ENCODE measurements at regions of chr7 and their contacts with region 1.

Region 1: DNA sequence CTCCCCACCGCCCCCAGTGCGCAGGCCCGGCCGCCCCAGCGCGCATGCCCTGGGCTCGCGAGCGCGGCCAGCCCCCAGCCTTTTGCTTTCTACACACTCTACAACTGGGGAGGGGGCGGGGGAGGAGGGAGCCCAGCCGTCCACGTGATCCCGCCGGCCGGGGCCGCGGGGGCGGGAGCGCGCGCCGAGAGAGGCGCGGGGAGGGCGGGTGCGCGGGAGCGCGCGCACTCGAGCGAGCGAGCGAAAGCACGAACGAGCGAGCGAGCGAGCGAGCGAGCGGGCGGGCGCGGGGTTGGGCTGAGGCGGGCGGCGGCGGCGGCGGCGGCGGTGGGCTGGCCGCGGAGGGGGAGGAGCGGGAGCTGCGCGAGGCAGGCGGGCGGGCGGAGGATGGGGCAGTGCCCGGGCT is at the start of gene AUTS2:
- DNase-seq: peak; percentile 75 to 82
- ATAC-seq: peak; percentile 70 to 74
- H3K4me3 ChIP-seq: peak within 1 kb of the TSS; percentile 72 to 92 (median 88)
- H3K27ac ChIP-seq: peak within 1 kb of the TSS; percentile 85 to 94 (median 88)
- H3K4me1 ChIP-seq: peaks cover 10 to 31% of the 10 kb centered on the region in 2 donors
- H3K27me3 ChIP-seq: no peaks in the 10 kb centered on the region
- CTCF ChIP-seq: no peak
- POLR2A ChIP-seq: peak; percentile 34 to 41
- total RNA-seq, gene AUTS2: 2.5 to 16.2 (median 8.5) TPM

Region 2: GRCh38 chr7:69412331-69413078 is 185.6 kb before region 1 on chr7:
- in situ Hi-C with region 1: no loop called
- intact Hi-C with region 1: loop called (anchors 5 kb)
- DNase-seq: peak; percentile 33 to 48
- ATAC-seq: peak; percentile 90 to 98
- H3K4me3 ChIP-seq: no peak overlapping the region
- H3K27ac ChIP-seq: peak overlapping the region in 1 of 4 donors; percentile 52
- H3K4me1 ChIP-seq: peaks cover 0 to 9% of the 10 kb centered on the region in 2 donors
- H3K27me3 ChIP-seq: no peaks in the 10 kb centered on the region
- CTCF ChIP-seq: no peak
- POLR2A ChIP-seq: no peak

Region 3: DNA sequence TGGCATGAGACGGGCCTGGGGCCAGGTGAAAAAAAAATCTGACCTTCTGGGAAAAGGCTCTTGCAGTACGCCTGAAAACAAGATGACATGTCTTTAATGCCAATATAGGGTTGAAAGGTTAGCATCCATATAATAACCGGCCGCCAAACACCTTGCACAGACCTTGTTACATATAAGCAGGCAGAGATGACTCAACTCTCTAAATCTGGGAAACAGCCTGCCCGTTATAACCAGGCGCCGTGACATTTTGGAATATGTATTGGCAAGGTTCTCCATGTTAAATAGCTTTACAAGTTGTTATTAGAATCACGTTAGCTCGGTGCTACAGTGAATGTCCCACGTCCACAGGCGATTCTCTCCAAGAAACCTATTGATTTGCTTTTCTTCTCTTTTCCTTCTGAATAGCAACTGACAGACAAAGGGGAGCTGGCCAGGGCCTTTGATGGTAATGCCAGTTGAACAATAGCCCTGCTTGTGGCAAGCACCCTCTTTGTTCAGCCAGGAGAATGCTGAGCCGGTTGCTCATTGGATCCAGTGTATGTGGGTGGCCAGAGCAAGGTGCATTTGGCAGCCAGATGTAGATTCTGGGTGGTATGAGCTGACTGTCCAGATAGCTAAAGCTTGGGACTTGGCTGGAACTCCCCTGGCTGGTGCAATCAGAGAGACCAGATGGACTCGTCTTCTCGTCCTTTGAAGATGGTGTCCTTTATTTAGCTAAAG is 79.9 kb before region 1 on chr7:
- in situ Hi-C with region 1: no loop called
- intact Hi-C with region 1: loop called (anchors 5 kb)
- DNase-seq: peak; percentile 30 to 31
- ATAC-seq: peak; percentile 84 to 88
- H3K4me3 ChIP-seq: peak overlapping the region in 1 of 4 donors; percentile 20
- H3K27ac ChIP-seq: peak overlapping the region; percentile 60 to 83 (median 68)
- H3K4me1 ChIP-seq: peaks cover 0 to 17% of the 10 kb centered on the region in 2 donors
- H3K27me3 ChIP-seq: no peaks in the 10 kb centered on the region
- CTCF ChIP-seq: no peak
- POLR2A ChIP-seq: no peak

Region 4: GRCh38 chr7:69553190-69553589 is 44.9 kb before region 1 on chr7:
- in situ Hi-C with region 1: no loop called
- intact Hi-C with region 1: no loop called
- DNase-seq: no peak
- ATAC-seq: no peak
- H3K4me3 ChIP-seq: no peak overlapping the region
- H3K27ac ChIP-seq: no peak overlapping the region
- H3K4me1 ChIP-seq: no peaks in the 10 kb centered on the region
- H3K27me3 ChIP-seq: no peaks in the 10 kb centered on the region
- CTCF ChIP-seq: no peak
- POLR2A ChIP-seq: no peak

Region 5: DNA sequence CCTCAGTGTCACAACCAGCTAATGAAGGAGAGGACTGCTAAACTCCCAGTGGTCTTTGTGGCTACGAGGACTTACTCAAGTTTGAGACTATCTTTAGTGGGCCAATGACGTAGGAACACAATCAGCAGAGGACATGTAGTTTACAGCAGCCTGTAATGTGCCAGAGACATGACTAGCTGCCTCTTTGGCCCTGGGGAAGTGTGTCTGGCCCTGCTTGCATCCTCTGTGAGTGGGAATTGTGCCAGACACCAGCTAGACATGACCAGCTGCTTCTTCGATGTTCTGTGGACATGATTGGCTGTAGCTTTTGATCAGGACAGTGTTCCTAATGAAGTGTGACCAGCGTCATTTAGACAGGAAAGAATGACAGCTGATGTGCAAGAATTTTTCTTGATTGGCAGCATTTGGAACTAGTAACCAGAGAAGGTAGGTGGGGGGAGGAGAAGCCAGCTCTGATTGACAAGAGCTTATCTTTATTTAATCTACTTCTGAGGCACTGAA is 141.9 kb after region 1 on chr7:
- in situ Hi-C with region 1: no loop called
- intact Hi-C with region 1: loop called (anchors 1 kb)
- DNase-seq: peak; percentile 55 to 58
- ATAC-seq: peak; percentile 81 to 87
- H3K4me3 ChIP-seq: no peak overlapping the region
- H3K27ac ChIP-seq: peak overlapping the region in 3 of 4 donors; percentile 5 to 67 (median 29)
- H3K4me1 ChIP-seq: peaks cover 16 to 26% of the 10 kb centered on the region in 2 donors
- H3K27me3 ChIP-seq: no peaks in the 10 kb centered on the region
- CTCF ChIP-seq: no peak
- POLR2A ChIP-seq: no peak

Region 6: GRCh38 chr7:69780377-69780776 is 182.3 kb after region 1 on chr7:
- in situ Hi-C with region 1: no loop called
- intact Hi-C with region 1: loop called (anchors 2 kb)
- DNase-seq: peak; percentile 30 to 33
- ATAC-seq: peak; percentile 88 to 94
- H3K4me3 ChIP-seq: no peak overlapping the region
- H3K27ac ChIP-seq: peak overlapping the region; percentile 17 to 71 (median 51)
- H3K4me1 ChIP-seq: peaks cover 33 to 55% of the 10 kb centered on the region in 2 donors
- H3K27me3 ChIP-seq: no peaks in the 10 kb centered on the region
- CTCF ChIP-seq: no peak
- POLR2A ChIP-seq: no peak

Region 7: DNA sequence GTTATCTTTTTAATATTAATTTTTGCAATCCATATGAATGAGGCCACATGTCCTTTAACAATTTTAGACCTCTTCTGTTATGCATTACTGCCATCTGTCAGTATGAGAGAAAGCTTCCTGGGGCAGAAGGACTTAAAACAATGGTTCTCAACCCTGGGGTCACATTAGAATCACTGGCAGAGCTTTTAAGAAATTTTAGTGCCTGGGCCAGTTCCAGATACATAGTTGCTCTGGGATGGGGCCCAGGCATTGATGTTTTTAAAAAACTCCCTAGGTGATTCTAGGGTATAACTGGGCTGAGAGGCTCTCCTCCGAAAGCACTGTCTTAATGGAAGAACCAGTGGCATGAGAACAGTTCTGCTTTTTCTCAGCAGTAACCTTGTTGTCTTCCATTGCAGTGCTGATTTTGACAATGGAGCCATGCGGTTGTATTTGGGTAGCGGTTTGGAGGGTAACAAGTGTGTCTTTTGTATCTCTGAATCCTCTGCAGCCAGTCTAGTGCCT is 227.1 kb after region 1 on chr7:
- in situ Hi-C with region 1: no loop called
- intact Hi-C with region 1: loop called (anchors 5 kb)
- DNase-seq: no peak
- ATAC-seq: no peak
- H3K4me3 ChIP-seq: peak overlapping the region in 1 of 4 donors; percentile 7
- H3K27ac ChIP-seq: no peak overlapping the region
- H3K4me1 ChIP-seq: peaks cover 8 to 12% of the 10 kb centered on the region in 2 donors
- H3K27me3 ChIP-seq: no peaks in the 10 kb centered on the region
- CTCF ChIP-seq: no peak
- POLR2A ChIP-seq: no peak